ENCODE measurements at regions of chr11 and their contacts with region 1.

Region 1: GRCh38 chr11:96424693-96425092 is 34.9 kb downstream of the JRKL start:
- DNase-seq: no peak
- ATAC-seq: no peak
- H3K4me3 ChIP-seq: no peak overlapping the region
- H3K4me3 Mint-ChIP-seq: no peak overlapping the region
- H3K27ac ChIP-seq: no peak overlapping the region
- H3K27ac Mint-ChIP-seq: no peak overlapping the region
- H3K4me1 ChIP-seq: no peaks in the 10 kb centered on the region
- H3K4me1 Mint-ChIP-seq: no peaks in the 10 kb centered on the region
- H3K27me3 ChIP-seq: no peaks in the 10 kb centered on the region
- H3K27me3 Mint-ChIP-seq: peaks cover 28% of the 10 kb centered on the region
- CTCF ChIP-seq: no peak

Region 2: DNA sequence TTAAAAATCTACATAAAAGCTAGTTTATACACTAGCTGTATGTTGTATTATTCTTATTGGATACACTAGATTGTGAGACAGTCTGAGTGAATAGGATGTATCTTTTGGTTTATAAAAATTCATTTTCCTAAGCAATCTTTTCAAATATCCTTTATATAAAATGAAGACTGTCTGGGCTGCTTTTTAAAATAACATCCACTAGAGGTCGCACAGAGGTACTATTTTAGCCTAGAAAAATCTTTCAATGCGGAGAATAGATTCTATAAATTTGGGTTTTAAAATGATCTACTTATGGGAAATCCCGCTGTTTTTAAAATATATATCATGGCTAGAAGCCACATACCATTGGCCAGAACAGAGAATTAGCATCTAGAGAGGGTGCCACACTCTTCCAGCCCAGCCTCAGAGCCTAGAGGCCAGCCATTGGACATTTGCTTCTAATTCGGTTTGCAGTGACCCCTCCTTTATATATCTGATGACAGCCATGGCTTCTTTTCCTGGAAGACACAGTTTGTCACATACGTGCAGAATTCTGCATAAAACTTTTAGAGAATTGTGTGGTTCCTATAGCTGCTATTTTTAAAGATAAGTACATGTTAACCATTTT is 1905.1 kb before region 1 on chr11:
- CTCF ChIA-PET with region 1: interaction called, 4 read pairs
- POLR2A ChIA-PET with region 1: no interaction called
- intact Hi-C with region 1: loop called in 1 of 2 experiments (anchors 1 kb)
- DNase-seq: peak in 3 of 9 experiments; percentile 12 to 56 (median 45)
- ATAC-seq: peak; percentile 49
- H3K4me3 ChIP-seq: no peak overlapping the region
- H3K4me3 Mint-ChIP-seq: no peak overlapping the region
- H3K27ac ChIP-seq: no peak overlapping the region
- H3K27ac Mint-ChIP-seq: no peak overlapping the region
- H3K4me1 ChIP-seq: no peaks in the 10 kb centered on the region
- H3K4me1 Mint-ChIP-seq: no peaks in the 10 kb centered on the region
- H3K27me3 ChIP-seq: no peaks in the 10 kb centered on the region
- H3K27me3 Mint-ChIP-seq: peaks cover 9% of the 10 kb centered on the region
- CTCF ChIP-seq: peak; percentile 72

Region 3: DNA sequence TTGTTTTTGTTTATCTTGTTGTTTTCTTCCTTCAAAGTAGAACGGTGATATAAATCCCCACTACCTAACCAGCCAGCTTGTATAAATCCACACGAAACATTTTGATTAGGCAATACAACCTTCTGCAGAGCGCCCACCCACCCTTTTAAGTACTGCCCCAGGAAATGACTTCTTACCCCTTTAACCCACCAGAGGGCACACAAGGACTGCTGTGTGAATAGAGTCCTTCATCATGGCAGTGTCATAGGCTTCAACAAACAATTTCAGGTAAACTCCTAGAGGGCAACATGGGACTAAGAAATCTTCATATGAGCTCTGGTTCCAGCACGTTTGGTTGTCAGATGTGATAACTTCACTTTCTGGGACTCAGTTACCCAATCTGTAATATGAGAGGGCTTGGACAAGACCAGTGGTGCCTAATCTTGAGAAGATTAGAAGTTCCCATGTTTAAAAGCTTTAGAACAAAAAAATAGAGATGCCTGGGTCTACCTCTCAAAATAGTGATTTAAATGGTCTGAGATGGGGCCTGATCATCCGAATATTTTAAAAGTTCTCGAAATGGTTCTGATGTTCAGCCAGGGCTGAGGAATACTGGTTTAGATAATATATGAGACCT is 1801.5 kb before region 1 on chr11:
- CTCF ChIA-PET with region 1: no interaction called
- POLR2A ChIA-PET with region 1: no interaction called
- intact Hi-C with region 1: loop called (anchors 2 kb)
- DNase-seq: peak in 6 of 9 experiments; percentile 19 to 67 (median 30)
- ATAC-seq: peak; percentile 68
- H3K4me3 ChIP-seq: no peak overlapping the region
- H3K4me3 Mint-ChIP-seq: no peak overlapping the region
- H3K27ac ChIP-seq: no peak overlapping the region
- H3K27ac Mint-ChIP-seq: no peak overlapping the region
- H3K4me1 ChIP-seq: no peaks in the 10 kb centered on the region
- H3K4me1 Mint-ChIP-seq: peaks cover 3% of the 10 kb centered on the region
- H3K27me3 ChIP-seq: no peaks in the 10 kb centered on the region
- H3K27me3 Mint-ChIP-seq: peaks cover 11% of the 10 kb centered on the region
- CTCF ChIP-seq: peak; percentile 41

Region 4: GRCh38 chr11:94786264-94787126 is 1638.2 kb before region 1 on chr11:
- CTCF ChIA-PET with region 1: no interaction called
- POLR2A ChIA-PET with region 1: no interaction called
- intact Hi-C with region 1: loop called in 1 of 2 experiments (anchors 1 kb)
- DNase-seq: peak in 2 of 9 experiments; percentile 28 to 53
- ATAC-seq: peak; percentile 38
- H3K4me3 ChIP-seq: no peak overlapping the region
- H3K4me3 Mint-ChIP-seq: no peak overlapping the region
- H3K27ac ChIP-seq: no peak overlapping the region
- H3K27ac Mint-ChIP-seq: no peak overlapping the region
- H3K4me1 ChIP-seq: no peaks in the 10 kb centered on the region
- H3K4me1 Mint-ChIP-seq: no peaks in the 10 kb centered on the region
- H3K27me3 ChIP-seq: no peaks in the 10 kb centered on the region
- H3K27me3 Mint-ChIP-seq: peaks cover 6% of the 10 kb centered on the region
- CTCF ChIP-seq: peak; percentile 60

Region 5: DNA sequence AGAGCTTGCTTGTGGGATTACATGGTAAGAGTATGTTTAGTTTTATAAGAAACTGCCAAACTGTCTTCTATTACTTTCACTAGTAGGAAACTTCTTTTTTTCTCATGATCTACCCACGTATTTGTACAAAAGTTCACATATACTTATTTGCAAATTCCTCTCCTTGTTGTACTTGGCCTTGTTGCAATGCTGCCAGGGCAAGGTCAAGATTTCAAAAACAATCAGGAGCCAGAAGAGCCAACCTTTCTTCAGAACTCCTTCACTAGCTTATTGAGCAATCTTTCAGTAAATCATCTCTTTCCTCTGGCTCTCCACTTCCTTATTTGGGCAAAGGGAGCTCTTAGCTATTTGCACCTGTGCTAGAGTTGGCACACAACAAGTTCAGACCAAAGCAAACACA is 1348.3 kb before region 1 on chr11:
- CTCF ChIA-PET with region 1: no interaction called
- POLR2A ChIA-PET with region 1: no interaction called
- intact Hi-C with region 1: loop called in 1 of 2 experiments (anchors 10 kb)
- DNase-seq: no peak
- ATAC-seq: no peak
- H3K4me3 ChIP-seq: no peak overlapping the region
- H3K4me3 Mint-ChIP-seq: no peak overlapping the region
- H3K27ac ChIP-seq: no peak overlapping the region
- H3K27ac Mint-ChIP-seq: no peak overlapping the region
- H3K4me1 ChIP-seq: no peaks in the 10 kb centered on the region
- H3K4me1 Mint-ChIP-seq: peaks cover 5% of the 10 kb centered on the region
- H3K27me3 ChIP-seq: no peaks in the 10 kb centered on the region
- H3K27me3 Mint-ChIP-seq: no peaks in the 10 kb centered on the region
- CTCF ChIP-seq: no peak

Region 6: DNA sequence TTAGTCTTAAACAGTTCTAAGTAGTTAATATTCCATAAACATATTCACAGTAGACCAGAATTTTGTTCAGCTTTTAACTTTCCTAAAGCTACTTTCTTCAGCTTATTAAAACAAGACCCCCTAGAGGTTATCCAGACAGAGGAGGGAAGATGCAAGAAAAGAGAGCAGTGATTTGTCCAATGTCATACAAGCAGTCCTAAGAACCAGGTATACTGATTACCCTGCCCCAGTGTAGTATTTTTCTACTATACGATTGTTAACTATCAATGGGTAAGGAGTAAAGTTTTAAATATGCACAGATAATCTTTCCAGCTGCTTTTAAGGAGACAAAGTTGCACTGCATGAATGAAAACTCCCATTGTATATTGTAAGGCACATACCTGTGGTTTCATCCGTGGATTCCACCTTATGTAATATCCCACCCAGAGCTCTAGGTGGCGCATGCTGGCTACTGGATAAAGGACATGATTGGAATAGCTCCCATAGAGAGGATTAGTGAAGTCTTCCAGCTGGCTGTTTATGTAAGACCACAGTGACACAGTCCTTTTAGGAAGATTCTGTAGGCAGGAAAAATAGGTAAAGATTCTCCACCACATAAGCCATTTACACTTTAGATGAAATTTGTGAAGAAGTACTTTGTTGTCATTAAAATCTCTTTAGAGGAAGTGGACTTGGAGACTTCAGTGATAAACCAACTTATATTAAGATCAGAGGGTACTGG is 588.8 kb before region 1 on chr11:
- CTCF ChIA-PET with region 1: interaction called, 8 read pairs
- POLR2A ChIA-PET with region 1: no interaction called
- intact Hi-C with region 1: loop called (anchors 1 kb)
- DNase-seq: peak; percentile 8 to 70 (median 55)
- ATAC-seq: peak; percentile 93
- H3K4me3 ChIP-seq: no peak overlapping the region
- H3K4me3 Mint-ChIP-seq: no peak overlapping the region
- H3K27ac ChIP-seq: no peak overlapping the region
- H3K27ac Mint-ChIP-seq: no peak overlapping the region
- H3K4me1 ChIP-seq: no peaks in the 10 kb centered on the region
- H3K4me1 Mint-ChIP-seq: no peaks in the 10 kb centered on the region
- H3K27me3 ChIP-seq: no peaks in the 10 kb centered on the region
- H3K27me3 Mint-ChIP-seq: no peaks in the 10 kb centered on the region
- CTCF ChIP-seq: peak; percentile 86

Region 7: DNA sequence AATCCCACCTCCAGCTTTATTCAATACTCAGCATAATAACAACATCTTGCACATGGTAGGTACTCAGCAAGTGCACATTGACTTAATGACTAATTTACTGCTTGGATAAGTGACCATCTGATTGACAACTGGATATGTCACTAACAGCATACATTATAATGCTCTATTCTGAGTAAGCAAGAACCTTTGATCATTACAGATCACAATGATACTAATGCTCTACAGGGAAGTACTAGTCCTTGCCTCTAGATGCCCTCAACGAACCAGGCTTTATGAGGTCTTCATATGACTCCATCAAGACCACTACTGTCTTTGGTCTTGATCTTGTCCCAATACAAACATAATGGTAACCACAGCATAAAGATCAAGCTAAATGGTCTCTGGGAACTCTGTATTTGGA is 333.2 kb before region 1 on chr11:
- CTCF ChIA-PET with region 1: no interaction called
- POLR2A ChIA-PET with region 1: no interaction called
- intact Hi-C with region 1: loop called in 1 of 2 experiments (anchors 1 kb)
- DNase-seq: peak in 4 of 9 experiments; percentile 14 to 66 (median 42)
- ATAC-seq: peak; percentile 97
- H3K4me3 ChIP-seq: no peak overlapping the region
- H3K4me3 Mint-ChIP-seq: no peak overlapping the region
- H3K27ac ChIP-seq: no peak overlapping the region
- H3K27ac Mint-ChIP-seq: peak overlapping the region; percentile 90
- H3K4me1 ChIP-seq: peaks cover 24% of the 10 kb centered on the region
- H3K4me1 Mint-ChIP-seq: peaks cover 81% of the 10 kb centered on the region
- H3K27me3 ChIP-seq: no peaks in the 10 kb centered on the region
- H3K27me3 Mint-ChIP-seq: no peaks in the 10 kb centered on the region
- CTCF ChIP-seq: peak; percentile 41

Region 8: DNA sequence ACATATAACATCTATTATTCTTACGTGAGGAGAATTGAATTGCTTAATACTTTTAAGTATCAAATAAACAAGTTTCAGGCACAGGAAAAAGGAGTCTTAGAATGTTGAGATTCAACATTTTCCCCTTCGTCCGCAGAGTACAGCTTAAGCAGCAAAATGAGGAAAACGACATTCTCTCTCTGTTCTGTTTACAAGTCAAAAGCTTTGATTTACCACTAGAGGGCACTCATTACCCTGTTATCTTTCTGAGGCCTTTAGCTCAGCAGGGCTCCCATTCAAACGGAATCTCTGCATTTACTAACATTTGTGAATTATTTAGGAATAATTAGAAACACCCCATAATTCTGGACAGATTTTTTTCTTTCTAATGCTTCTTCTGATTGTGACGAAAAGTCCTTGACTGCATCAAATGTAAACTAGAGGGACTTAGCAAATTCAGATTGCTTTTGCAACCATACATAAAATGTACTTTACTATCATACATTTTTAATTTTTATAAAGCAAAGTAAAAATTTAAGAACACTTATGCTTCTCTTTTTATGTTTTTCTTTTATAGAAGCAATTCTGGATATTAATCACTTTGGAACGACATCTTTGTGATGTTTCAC is 40.1 kb after region 1 on chr11:
- CTCF ChIA-PET with region 1: no interaction called
- POLR2A ChIA-PET with region 1: no interaction called
- intact Hi-C with region 1: no loop called
- DNase-seq: peak in 3 of 9 experiments; percentile 4 to 67 (median 55)
- ATAC-seq: peak; percentile 66
- H3K4me3 ChIP-seq: no peak overlapping the region
- H3K4me3 Mint-ChIP-seq: no peak overlapping the region
- H3K27ac ChIP-seq: no peak overlapping the region
- H3K27ac Mint-ChIP-seq: no peak overlapping the region
- H3K4me1 ChIP-seq: peaks cover 5% of the 10 kb centered on the region
- H3K4me1 Mint-ChIP-seq: peaks cover 6% of the 10 kb centered on the region
- H3K27me3 ChIP-seq: peaks cover 0 to 1% of the 10 kb centered on the region in 2 experiments
- H3K27me3 Mint-ChIP-seq: peaks cover 6% of the 10 kb centered on the region
- CTCF ChIP-seq: peak; percentile 83